Dorsolateral prefrontal cortex (tissue), 120 donors: ENCODE measurements at regions of chr3 and their contacts with region 1.

Region 1: GRCh38 chr3:45817831-45818522 is 21.6 kb upstream of the SLC6A20 start:
- DNase-seq: peak in 1 of 10 donors; percentile 42
- H3K4me3 ChIP-seq: no peak overlapping the region
- H3K27ac ChIP-seq: peak overlapping the region in 40 of 59 donors; percentile 2 to 80 (median 52)
- H3K27me3 ChIP-seq: no peaks in the 10 kb centered on the region
- CTCF ChIP-seq: no peak

Region 2: GRCh38 chr3:45884368-45885201 is 66.6 kb after region 1 on chr3:
- intact Hi-C with region 1: loop called in 1 of 2 experiments (anchors 2 kb)
- DNase-seq: peak in 8 of 10 donors; percentile 33 to 79 (median 68)
- H3K4me3 ChIP-seq: no peak overlapping the region
- H3K27ac ChIP-seq: peak overlapping the region in 48 of 59 donors; percentile 4 to 86 (median 61)
- H3K27me3 ChIP-seq: no peaks in the 10 kb centered on the region
- CTCF ChIP-seq: no peak

Region 3: GRCh38 chr3:46423588-46423987 is 605.6 kb after region 1 on chr3:
- intact Hi-C with region 1: no loop called
- DNase-seq: peak in 2 of 10 donors; percentile 37 to 51
- H3K4me3 ChIP-seq: no peak overlapping the region
- H3K27ac ChIP-seq: peak overlapping the region in 4 of 59 donors; percentile 30 to 46 (median 38)
- H3K27me3 ChIP-seq: no peaks in the 10 kb centered on the region
- CTCF ChIP-seq: no peak